ENCODE measurements at regions of chr2 and their contacts with region 1.

Region 1: DNA sequence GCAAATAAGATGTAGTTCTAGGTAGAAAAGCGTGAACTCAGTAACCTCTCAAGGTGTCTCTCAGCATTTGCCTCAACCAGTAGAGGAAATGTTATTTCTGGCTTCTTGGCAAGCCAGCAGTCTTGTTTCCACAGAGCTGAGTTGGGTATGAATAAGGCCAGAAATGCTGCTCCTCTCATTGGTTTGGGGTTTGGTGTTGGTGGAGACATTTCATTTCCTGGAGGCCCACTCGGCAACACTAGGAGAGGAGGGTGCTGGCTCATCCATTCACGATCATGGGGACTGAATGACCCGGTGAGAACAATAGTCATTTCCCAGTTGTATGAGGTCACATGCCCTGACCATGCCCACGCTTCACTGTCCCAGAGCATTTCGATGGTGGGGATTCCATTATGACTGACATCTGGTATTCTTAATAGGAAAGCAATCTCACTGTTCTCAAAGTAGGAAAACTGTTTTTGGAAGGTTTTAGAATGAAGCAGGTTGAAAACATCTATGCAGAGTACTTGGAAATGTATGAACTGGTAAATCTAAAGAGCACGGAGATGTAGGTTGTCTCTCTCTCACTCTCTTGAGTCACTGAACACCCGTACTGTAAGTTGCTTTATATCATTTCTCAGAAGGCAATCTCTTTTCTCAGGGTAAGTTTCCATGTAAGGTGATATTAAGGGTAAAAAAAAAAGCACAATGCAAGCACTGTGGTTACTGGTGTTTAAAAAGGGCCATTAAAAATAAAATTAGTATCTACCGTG is 37.1 kb upstream of the CTLA4 start:
- DNase-seq: peak; percentile 32
- H3K4me3 Mint-ChIP-seq: peak overlapping the region; percentile 27
- H3K27ac Mint-ChIP-seq: peak overlapping the region; percentile 87
- H3K4me1 Mint-ChIP-seq: peaks cover 31% of the 10 kb centered on the region
- H3K27me3 Mint-ChIP-seq: no peaks in the 10 kb centered on the region

Region 2: GRCh38 chr2:203782262-203782976 is 48.1 kb before region 1 on chr2:
- intact Hi-C with region 1: loop called (anchors 1 kb)
- DNase-seq: peak; percentile 50
- H3K4me3 Mint-ChIP-seq: no peak overlapping the region
- H3K27ac Mint-ChIP-seq: peak overlapping the region; percentile 92
- H3K4me1 Mint-ChIP-seq: peaks cover 63% of the 10 kb centered on the region
- H3K27me3 Mint-ChIP-seq: no peaks in the 10 kb centered on the region

Region 3: GRCh38 chr2:203887677-203888076 is 57.2 kb after region 1 on chr2:
- intact Hi-C with region 1: loop called (anchors 1 kb)
- DNase-seq: no peak
- H3K4me3 Mint-ChIP-seq: no peak overlapping the region
- H3K27ac Mint-ChIP-seq: peak overlapping the region; percentile 27
- H3K4me1 Mint-ChIP-seq: peaks cover 74% of the 10 kb centered on the region
- H3K27me3 Mint-ChIP-seq: no peaks in the 10 kb centered on the region

Region 4: GRCh38 chr2:203934041-203934492 is 103.6 kb after region 1 on chr2:
- intact Hi-C with region 1: loop called (anchors 1 kb)
- DNase-seq: peak; percentile 39
- H3K4me3 Mint-ChIP-seq: peak overlapping the region; percentile 73
- H3K27ac Mint-ChIP-seq: peak overlapping the region; percentile 93
- H3K4me1 Mint-ChIP-seq: peaks cover 59% of the 10 kb centered on the region
- H3K27me3 Mint-ChIP-seq: no peaks in the 10 kb centered on the region

Region 5: DNA sequence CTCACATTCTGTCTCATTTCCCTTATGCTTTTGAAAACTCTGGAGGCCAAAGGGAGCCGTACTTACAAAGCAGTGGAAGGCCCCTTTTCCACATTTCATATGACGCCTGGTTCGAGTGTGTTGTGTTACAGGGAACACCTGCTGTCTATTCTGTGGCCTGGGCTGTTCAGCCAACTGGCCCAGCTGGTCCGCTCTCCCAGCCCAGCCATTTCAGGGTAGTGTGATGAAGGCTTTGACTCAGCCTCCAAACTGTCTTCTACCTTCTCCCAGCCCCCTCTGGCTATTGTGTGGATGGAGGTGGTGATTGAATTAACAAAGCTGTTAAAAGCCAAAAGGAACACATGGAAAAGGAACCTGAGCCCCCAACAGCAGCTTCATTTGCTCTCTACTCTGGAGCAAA is 339.9 kb after region 1 on chr2:
- intact Hi-C with region 1: no loop called
- DNase-seq: no peak
- H3K4me3 Mint-ChIP-seq: no peak overlapping the region
- H3K27ac Mint-ChIP-seq: no peak overlapping the region
- H3K4me1 Mint-ChIP-seq: no peaks in the 10 kb centered on the region
- H3K27me3 Mint-ChIP-seq: peaks cover 5% of the 10 kb centered on the region